HepG2 (cell line): ENCODE measurements at regions of chr10 and their contacts with region 1.

Region 1: DNA sequence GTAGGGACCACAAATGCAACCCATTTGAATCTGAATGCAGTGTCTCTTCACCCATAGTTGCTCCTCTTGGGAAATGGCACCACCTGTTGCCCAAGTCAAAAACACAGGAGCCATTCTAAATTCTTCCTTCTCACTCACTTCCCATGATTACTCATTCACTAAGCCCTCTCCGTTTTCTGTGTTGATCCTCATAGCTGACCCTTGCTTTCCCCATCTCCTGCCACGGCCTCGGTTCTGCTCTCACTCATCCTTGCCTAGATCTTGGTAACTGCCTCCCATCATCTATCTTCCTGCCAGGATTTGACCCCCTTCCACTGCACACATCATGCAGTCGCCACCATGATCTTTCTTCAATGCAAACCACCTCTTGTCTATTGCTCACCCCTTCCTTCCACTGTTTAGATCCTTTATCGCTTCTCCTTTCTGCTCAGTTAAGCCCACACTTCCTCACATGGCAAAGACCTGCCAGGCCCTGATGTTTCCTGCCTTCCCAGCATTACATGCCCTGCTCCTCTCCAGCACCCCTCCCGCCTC is 19.0 kb upstream of the CPN1 start:
- DNase-seq: peak; percentile 76
- ATAC-seq: peak; percentile 67
- H3K4me3 ChIP-seq: peak overlapping the region; percentile 41 to 69 (median 50)
- H3K27ac ChIP-seq: peak overlapping the region; percentile 95
- H3K4me1 ChIP-seq: peaks cover 39% of the 10 kb centered on the region
- H3K27me3 ChIP-seq: no peaks in the 10 kb centered on the region
- CTCF ChIP-seq: peak; percentile 91
- EP300 ChIP-seq: no peak
- POLR2A ChIP-seq: peak in 1 of 2 experiments; percentile 61; a peak in 2 of 4 replicates
- RAD21 ChIP-seq: peak; percentile 63

Region 2: DNA sequence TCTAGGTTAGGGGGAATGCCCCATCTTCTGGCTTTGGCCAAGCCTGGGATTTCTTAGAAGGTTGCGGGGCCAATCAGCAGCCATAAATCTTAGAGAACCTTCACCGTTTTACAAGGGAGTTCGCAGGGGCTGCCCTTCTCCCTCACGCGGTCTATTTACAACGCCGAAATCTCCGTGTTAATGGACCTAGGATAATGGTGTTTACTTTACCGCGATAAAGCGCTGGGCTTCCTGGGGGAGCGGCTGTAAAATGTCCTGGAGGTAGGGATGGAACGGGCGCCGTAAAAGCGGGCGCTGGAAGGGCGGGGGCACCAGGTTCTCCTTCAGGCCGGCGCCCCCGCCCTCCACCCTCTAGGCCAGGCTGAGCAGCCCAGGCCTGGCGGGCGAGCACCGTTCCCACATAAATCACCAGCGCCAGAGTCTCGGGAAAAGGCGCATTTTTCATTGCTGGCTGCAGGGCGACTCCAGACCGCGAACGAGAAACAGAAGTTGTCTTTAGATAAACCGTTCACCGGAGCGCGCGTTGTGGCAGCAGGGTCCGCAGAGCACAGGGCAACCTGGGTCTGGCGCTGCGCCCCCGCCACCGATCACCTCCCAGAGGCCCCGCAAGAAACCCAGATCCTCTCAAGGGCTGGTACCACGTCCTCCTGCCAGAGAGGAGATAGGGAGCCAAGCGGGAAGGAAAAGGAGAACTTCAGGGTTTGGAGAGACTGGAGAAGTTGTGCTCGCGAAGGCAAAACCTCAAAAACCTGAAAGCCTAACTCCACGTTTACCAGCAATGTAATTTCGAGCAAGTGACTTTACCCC is 580.5 kb before region 1 on chr10:
- CTCF ChIA-PET with region 1: no interaction called
- POLR2A ChIA-PET with region 1: no interaction called
- in situ Hi-C with region 1: no loop called
- intact Hi-C with region 1: no loop called
- DNase-seq: no peak
- ATAC-seq: no peak
- H3K4me3 ChIP-seq: peak overlapping the region in 1 of 3 experiments; percentile 4; a peak in 1 of 6 replicates
- H3K27ac ChIP-seq: no peak overlapping the region
- H3K4me1 ChIP-seq: peaks cover 44% of the 10 kb centered on the region
- H3K27me3 ChIP-seq: peaks cover 7 to 61% of the 10 kb centered on the region in 2 experiments
- CTCF ChIP-seq: no peak
- EP300 ChIP-seq: no peak
- POLR2A ChIP-seq: no peak
- RAD21 ChIP-seq: no peak

Region 3: DNA sequence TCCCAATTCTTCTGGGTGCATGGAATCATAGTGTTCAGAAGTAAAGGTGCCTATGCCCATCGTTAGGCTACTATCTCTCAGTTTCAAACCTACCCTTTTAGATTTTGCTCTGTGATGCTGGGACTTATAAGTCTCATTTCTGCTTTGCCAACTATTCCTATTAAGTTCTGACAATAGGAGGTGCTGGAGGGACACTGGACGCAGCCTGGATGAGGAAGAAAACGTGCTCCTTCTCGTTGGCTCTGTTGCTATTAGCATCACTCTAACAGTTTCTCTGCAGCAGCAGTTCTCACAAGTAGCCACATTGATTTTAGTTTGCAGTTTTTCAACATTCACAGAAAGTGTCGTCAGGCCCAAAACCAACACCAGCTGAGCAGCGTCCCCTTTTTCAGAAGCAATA is 245.9 kb before region 1 on chr10:
- CTCF ChIA-PET with region 1: no interaction called
- POLR2A ChIA-PET with region 1: no interaction called
- in situ Hi-C with region 1: loop called (anchors 10 kb)
- intact Hi-C with region 1: loop called (anchors 5 kb)
- DNase-seq: peak; percentile 41
- ATAC-seq: peak; percentile 10
- H3K4me3 ChIP-seq: no peak overlapping the region
- H3K27ac ChIP-seq: no peak overlapping the region
- H3K4me1 ChIP-seq: peaks cover 28% of the 10 kb centered on the region
- H3K27me3 ChIP-seq: no peaks in the 10 kb centered on the region
- CTCF ChIP-seq: peak; percentile 59
- EP300 ChIP-seq: no peak
- POLR2A ChIP-seq: peak in 1 of 2 experiments; percentile 30; a peak in 1 of 4 replicates
- RAD21 ChIP-seq: 0 out of 2 replicates have a peak, but pooled peaks have one; percentile 21

Region 4: DNA sequence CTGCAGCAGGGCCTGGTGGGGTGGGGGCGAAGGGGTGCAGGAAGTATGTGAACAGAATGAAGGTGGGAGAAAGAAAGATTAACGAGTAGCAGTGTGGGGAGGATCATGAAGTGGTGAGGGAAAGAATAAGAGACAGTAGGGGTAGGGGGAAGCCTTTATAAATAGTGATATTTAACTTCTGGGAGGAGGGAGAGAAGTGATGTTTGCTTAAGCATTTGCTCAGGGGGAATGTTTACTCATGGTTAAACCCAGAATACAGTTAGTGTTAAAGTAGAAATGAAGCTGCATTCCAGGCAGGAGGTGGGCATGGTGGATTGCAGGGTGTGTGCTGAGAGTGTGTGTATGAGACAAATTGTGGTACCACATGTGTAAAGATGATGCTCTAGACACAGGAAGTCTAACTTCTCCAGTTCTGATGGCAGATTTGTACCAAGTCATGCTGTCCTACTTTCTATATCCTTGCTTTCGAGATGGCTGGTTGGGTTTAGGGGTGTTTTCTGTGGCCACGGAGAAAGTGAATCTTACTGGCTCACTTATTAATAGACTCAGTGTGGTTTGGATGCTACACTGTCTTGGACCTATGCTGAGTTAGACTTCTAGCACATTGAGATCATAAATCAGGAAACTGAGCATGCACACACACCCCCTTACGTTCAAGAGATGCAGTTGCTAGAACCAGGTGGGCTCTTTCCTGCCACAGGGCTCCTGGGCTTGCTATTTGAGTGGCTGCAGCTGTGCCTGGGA is 80.4 kb before region 1 on chr10:
- CTCF ChIA-PET with region 1: no interaction called
- POLR2A ChIA-PET with region 1: no interaction called
- in situ Hi-C with region 1: no loop called
- intact Hi-C with region 1: loop called (anchors 5 kb)
- DNase-seq: peak; percentile 81
- ATAC-seq: peak; percentile 88
- H3K4me3 ChIP-seq: peak overlapping the region; percentile 17 to 51 (median 35)
- H3K27ac ChIP-seq: peak overlapping the region; percentile 49
- H3K4me1 ChIP-seq: peaks cover 61% of the 10 kb centered on the region
- H3K27me3 ChIP-seq: no peaks in the 10 kb centered on the region
- CTCF ChIP-seq: no peak
- EP300 ChIP-seq: peak in 1 of 2 experiments; percentile 55; a peak in 1 of 4 replicates
- POLR2A ChIP-seq: no peak
- RAD21 ChIP-seq: no peak

Region 5: DNA sequence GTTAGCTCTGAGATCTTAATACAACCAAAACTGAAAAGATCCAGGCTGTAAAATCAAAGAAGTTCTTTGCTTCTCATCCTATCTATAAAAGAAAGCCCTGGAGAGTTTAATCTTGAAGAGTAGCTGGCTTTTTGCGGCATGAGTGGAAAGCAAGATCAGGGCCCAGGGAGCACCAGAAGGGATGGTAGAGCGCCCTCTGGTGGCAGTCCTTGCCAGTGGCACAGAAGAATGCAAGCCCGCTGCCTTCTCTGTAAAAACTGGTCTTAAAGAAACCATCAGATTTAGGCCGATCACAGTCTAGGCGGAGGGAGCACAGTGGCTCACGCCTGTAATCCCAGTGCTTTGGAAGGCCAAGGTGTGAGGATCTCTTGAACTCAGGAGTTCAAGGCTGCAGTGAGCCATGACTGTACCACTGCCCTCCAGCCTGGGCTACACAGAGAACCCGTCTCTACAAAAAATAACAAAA is 54.7 kb before region 1 on chr10:
- CTCF ChIA-PET with region 1: no interaction called
- POLR2A ChIA-PET with region 1: no interaction called
- in situ Hi-C with region 1: no loop called
- intact Hi-C with region 1: loop called (anchors 1 kb)
- DNase-seq: peak; percentile 50
- ATAC-seq: peak; percentile 93
- H3K4me3 ChIP-seq: no peak overlapping the region
- H3K27ac ChIP-seq: no peak overlapping the region
- H3K4me1 ChIP-seq: peaks cover 7% of the 10 kb centered on the region; the same call in 1 of the 2 replicates
- H3K27me3 ChIP-seq: no peaks in the 10 kb centered on the region
- CTCF ChIP-seq: peak; percentile 92
- EP300 ChIP-seq: no peak
- POLR2A ChIP-seq: no peak
- RAD21 ChIP-seq: peak; percentile 83

Region 6: GRCh38 chr10:100057948-100058347 is 42.8 kb before region 1 on chr10:
- CTCF ChIA-PET with region 1: no interaction called
- POLR2A ChIA-PET with region 1: no interaction called
- in situ Hi-C with region 1: no loop called
- intact Hi-C with region 1: no loop called
- DNase-seq: no peak
- ATAC-seq: no peak
- H3K4me3 ChIP-seq: no peak overlapping the region
- H3K27ac ChIP-seq: no peak overlapping the region
- H3K4me1 ChIP-seq: no peaks in the 10 kb centered on the region
- H3K27me3 ChIP-seq: no peaks in the 10 kb centered on the region
- CTCF ChIP-seq: no peak
- EP300 ChIP-seq: no peak
- POLR2A ChIP-seq: no peak
- RAD21 ChIP-seq: no peak

Region 7: GRCh38 chr10:100084826-100085225 is 15.9 kb before region 1 on chr10:
- CTCF ChIA-PET with region 1: no interaction called
- POLR2A ChIA-PET with region 1: interaction called, 6 read pairs
- in situ Hi-C with region 1: no loop called
- intact Hi-C with region 1: loop called (anchors 1 kb)
- DNase-seq: no peak
- ATAC-seq: peak; percentile 43
- H3K4me3 ChIP-seq: no peak overlapping the region
- H3K27ac ChIP-seq: no peak overlapping the region
- H3K4me1 ChIP-seq: peaks cover 62% of the 10 kb centered on the region
- H3K27me3 ChIP-seq: no peaks in the 10 kb centered on the region; a peak in 2 of 5 replicates
- CTCF ChIP-seq: no peak
- EP300 ChIP-seq: no peak
- POLR2A ChIP-seq: no peak
- RAD21 ChIP-seq: no peak

Region 8: GRCh38 chr10:100185364-100186252 is 84.9 kb after region 1 on chr10 and contains the start of gene ERLIN1:
- CTCF ChIA-PET with region 1: no interaction called
- POLR2A ChIA-PET with region 1: interaction called, 3 read pairs
- in situ Hi-C with region 1: no loop called
- intact Hi-C with region 1: loop called (anchors 5 kb)
- DNase-seq: peak; percentile 81
- ATAC-seq: peak; percentile 93
- H3K4me3 ChIP-seq: peak within 1 kb of the TSS; percentile 72 to 83 (median 81)
- H3K27ac ChIP-seq: peak within 1 kb of the TSS; percentile 81
- H3K4me1 ChIP-seq: peaks cover 45% of the 10 kb centered on the region
- H3K27me3 ChIP-seq: no peaks in the 10 kb centered on the region; a peak in 1 of 5 replicates
- CTCF ChIP-seq: 0 out of 2 replicates have a peak, but pooled peaks have one; percentile 12
- EP300 ChIP-seq: 0 out of 4 replicates have a peak, but pooled peaks of 1 of the 2 experiments have one; percentile 17
- POLR2A ChIP-seq: peak; percentile 84
- RAD21 ChIP-seq: no peak; the same call in 1 of the 2 replicates
- total RNA-seq, gene ERLIN1: 46.9 and 69.3 TPM in 2 replicates